ENCODE measurements at regions of chr4 and their contacts with region 1.

Region 1: GRCh38 chr4:24686871-24687680 is 102.7 kb upstream of the DHX15 start:
- DNase-seq: peak; percentile 36
- ATAC-seq: peak; percentile 95
- H3K4me3 ChIP-seq: peak overlapping the region in 1 of 2 experiments; percentile 12; a peak in 1 of 4 replicates
- H3K27ac ChIP-seq: no peak overlapping the region
- H3K4me1 ChIP-seq: peaks cover 0 to 5% of the 10 kb centered on the region in 2 experiments; a peak in 1 of 4 replicates
- H3K27me3 ChIP-seq: peaks cover 9% of the 10 kb centered on the region; the same call in 1 of the 2 replicates
- CTCF ChIP-seq: peak; percentile 83 to 90 (median 83); a peak in 5 of 6 replicates
- POLR2A ChIP-seq: no peak
- RAD21 ChIP-seq: peak; percentile 82

Region 2: GRCh38 chr4:24472514-24473308 is 214.4 kb before region 1 on chr4:
- CTCF ChIA-PET with region 1: interaction called, 4 read pairs
- POLR2A ChIA-PET with region 1: no interaction called
- RAD21 ChIA-PET with region 1: no interaction called
- intact Hi-C with region 1: loop called (anchors 2 kb)
- DNase-seq: peak; percentile 50
- ATAC-seq: peak; percentile 88
- H3K4me3 ChIP-seq: peak overlapping the region; percentile 38 to 57
- H3K27ac ChIP-seq: no peak overlapping the region
- H3K4me1 ChIP-seq: peaks cover 8 to 16% of the 10 kb centered on the region in 2 experiments; a peak in 3 of 4 replicates
- H3K27me3 ChIP-seq: peaks cover 18% of the 10 kb centered on the region; the same call in 1 of the 2 replicates
- CTCF ChIP-seq: peak; percentile 27 to 84 (median 69); a peak in 5 of 6 replicates
- POLR2A ChIP-seq: no peak
- RAD21 ChIP-seq: peak; percentile 45

Region 3: DNA sequence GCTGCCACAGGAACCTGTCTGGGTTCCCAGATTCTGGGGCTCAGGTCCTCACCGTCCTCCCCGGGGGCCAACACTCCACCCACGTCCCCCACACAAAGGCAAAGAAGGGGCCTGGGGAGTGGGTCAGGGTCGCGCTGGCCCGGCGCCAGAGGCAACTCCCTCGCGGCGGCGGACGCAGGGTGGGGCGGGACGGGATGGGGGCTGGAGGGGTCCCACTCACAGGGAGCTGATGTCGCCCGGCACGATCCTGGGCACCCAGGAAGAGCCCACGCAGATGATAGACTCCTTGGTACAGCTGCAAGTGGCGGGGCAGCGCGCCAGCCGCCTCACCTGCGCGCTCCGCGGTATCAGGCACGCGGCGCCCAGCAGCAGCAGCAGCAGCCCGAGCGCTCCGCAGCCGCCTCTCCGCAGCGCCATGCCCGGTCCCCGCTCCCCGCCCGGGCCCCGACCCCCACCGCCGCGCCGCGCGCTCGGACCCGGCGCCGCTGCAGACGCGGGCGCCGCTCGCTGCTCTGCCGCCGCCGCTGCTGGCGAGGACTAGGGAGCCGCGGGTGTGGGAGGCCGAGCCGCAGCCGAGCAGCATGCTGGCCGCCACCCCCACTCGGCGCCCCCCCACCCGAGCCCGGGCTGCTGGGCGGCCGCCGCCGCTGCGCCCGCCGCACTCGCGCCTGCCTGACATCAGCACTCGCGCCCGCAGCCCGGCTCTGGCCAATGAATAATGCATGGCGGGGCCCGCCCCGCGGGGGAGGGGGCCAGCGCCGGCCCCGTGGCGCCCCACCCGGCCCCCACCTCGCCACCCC is 343.4 kb after region 1 on chr4 and contains the start of gene LGI2:
- CTCF ChIA-PET with region 1: no interaction called
- POLR2A ChIA-PET with region 1: no interaction called
- RAD21 ChIA-PET with region 1: no interaction called
- intact Hi-C with region 1: no loop called
- DNase-seq: no peak
- ATAC-seq: no peak
- H3K4me3 ChIP-seq: no peak within 1 kb of the TSS
- H3K27ac ChIP-seq: no peak within 1 kb of the TSS
- H3K4me1 ChIP-seq: no peaks in the 10 kb centered on the region
- H3K27me3 ChIP-seq: peaks cover 51% of the 10 kb centered on the region
- CTCF ChIP-seq: no peak
- POLR2A ChIP-seq: no peak
- RAD21 ChIP-seq: no peak
- total RNA-seq, gene LGI2: not detected

Measured in HCT116 (cell line).